ENCODE measurements at regions of chr2 and their contacts with region 1.

Region 1: DNA sequence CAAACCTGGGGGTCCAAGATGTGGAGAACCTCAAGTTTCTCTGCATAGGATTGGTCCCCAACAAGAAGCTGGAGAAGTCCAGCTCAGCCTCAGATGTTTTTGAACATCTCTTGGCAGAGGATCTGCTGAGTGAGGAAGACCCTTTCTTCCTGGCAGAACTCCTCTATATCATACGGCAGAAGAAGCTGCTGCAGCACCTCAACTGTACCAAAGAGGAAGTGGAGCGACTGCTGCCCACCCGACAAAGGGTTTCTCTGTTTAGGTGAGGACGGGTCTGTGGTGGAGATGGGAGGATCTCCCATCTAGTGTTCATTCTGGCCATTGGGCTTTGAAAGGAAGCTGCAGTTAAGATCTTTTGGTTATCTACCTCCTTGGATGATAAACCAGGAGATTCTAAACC is 2.9 kb downstream of the CASP10 start:
- DNase-seq: no peak
- ATAC-seq: no peak
- H3K4me3 ChIP-seq: no peak overlapping the region
- H3K27ac ChIP-seq: no peak overlapping the region
- H3K4me1 ChIP-seq: peaks cover 0 to 18% (median 1%) of the 10 kb centered on the region in 4 donors
- H3K27me3 ChIP-seq: no peaks in the 10 kb centered on the region
- CTCF ChIP-seq: no peak
- POLR2A ChIP-seq: no peak

Region 2: GRCh38 chr2:201231781-201232466 is 46.1 kb after region 1 on chr2:
- intact Hi-C with region 1: loop called in 1 of 2 experiments (anchors 5 kb)
- DNase-seq: peak; percentile 88 to 93 (median 89)
- ATAC-seq: peak; percentile 78 to 89 (median 85)
- H3K4me3 ChIP-seq: peak overlapping the region in 1 of 3 donors; percentile 24
- H3K27ac ChIP-seq: peak overlapping the region in 2 of 3 donors; percentile 9 to 27
- H3K4me1 ChIP-seq: peaks cover 0 to 39% (median 5%) of the 10 kb centered on the region in 4 donors
- H3K27me3 ChIP-seq: no peaks in the 10 kb centered on the region
- CTCF ChIP-seq: peak; percentile 91 to 98 (median 94)
- POLR2A ChIP-seq: no peak

Measured in right lobe of liver (tissue), 6 donors.